ENCODE measurements at regions of chr9 and their contacts with region 1.

Region 1: GRCh38 chr9:98101868-98102273 is 17.2 kb downstream of the TRIM14 start:
- DNase-seq: peak; percentile 86
- ATAC-seq: peak; percentile 96
- H3K4me3 Mint-ChIP-seq: peak overlapping the region; percentile 49
- H3K27ac Mint-ChIP-seq: peak overlapping the region; percentile 95
- H3K4me1 Mint-ChIP-seq: peaks cover 84% of the 10 kb centered on the region
- H3K27me3 Mint-ChIP-seq: no peaks in the 10 kb centered on the region

Region 2: GRCh38 chr9:97237951-97238851 is 863.7 kb before region 1 on chr9:
- CTCF ChIA-PET with region 1: no interaction called
- POLR2A ChIA-PET with region 1: no interaction called
- intact Hi-C with region 1: loop called in 1 of 2 experiments (anchors 5 kb)
- DNase-seq: peak; percentile 91
- ATAC-seq: peak; percentile 95
- H3K4me3 Mint-ChIP-seq: peak overlapping the region; percentile 93
- H3K27ac Mint-ChIP-seq: peak overlapping the region; percentile 97
- H3K4me1 Mint-ChIP-seq: peaks cover 12% of the 10 kb centered on the region
- H3K27me3 Mint-ChIP-seq: no peaks in the 10 kb centered on the region

Region 3: GRCh38 chr9:97696803-97697601 is 404.9 kb before region 1 on chr9 and contains the start of gene XPA:
- CTCF ChIA-PET with region 1: no interaction called
- POLR2A ChIA-PET with region 1: no interaction called
- intact Hi-C with region 1: loop called in 1 of 2 experiments (anchors 10 kb)
- DNase-seq: peak; percentile 98
- ATAC-seq: peak; percentile 95
- H3K4me3 Mint-ChIP-seq: peak within 1 kb of the TSS; percentile 81
- H3K27ac Mint-ChIP-seq: peak within 1 kb of the TSS; percentile 92
- H3K4me1 Mint-ChIP-seq: peaks cover 45% of the 10 kb centered on the region
- H3K27me3 Mint-ChIP-seq: peaks cover 2% of the 10 kb centered on the region
- total RNA-seq, gene XPA: 8.7 to 11.1 TPM

Region 4: GRCh38 chr9:97740848-97741821 is 360.7 kb before region 1 on chr9:
- CTCF ChIA-PET with region 1: no interaction called
- POLR2A ChIA-PET with region 1: no interaction called
- intact Hi-C with region 1: no loop called
- DNase-seq: peak; percentile 67
- ATAC-seq: peak; percentile 82
- H3K4me3 Mint-ChIP-seq: peak overlapping the region; percentile 26
- H3K27ac Mint-ChIP-seq: no peak overlapping the region
- H3K4me1 Mint-ChIP-seq: peaks cover 6% of the 10 kb centered on the region
- H3K27me3 Mint-ChIP-seq: peaks cover 59% of the 10 kb centered on the region

Region 5: DNA sequence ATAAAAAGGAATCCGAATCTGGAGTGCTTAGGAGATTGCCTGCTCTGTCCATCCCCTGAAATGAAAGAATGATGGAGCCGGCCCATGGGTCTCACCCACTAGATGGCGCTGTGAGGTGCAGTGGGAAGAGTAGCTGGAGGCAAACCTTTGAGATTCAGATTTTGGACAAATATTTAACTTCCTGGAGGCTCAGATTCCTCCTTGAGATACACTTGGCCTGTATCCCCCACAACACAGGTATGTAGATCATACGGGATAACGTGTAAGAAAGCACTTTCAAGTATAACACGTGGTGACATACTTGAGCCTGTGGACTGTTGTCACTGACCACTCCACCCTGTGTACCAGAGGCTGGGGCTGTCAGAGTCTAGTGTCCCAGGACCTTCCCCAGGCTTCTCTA is 211.8 kb before region 1 on chr9:
- CTCF ChIA-PET with region 1: no interaction called
- POLR2A ChIA-PET with region 1: no interaction called
- intact Hi-C with region 1: no loop called
- DNase-seq: peak; percentile 86
- ATAC-seq: peak; percentile 75
- H3K4me3 Mint-ChIP-seq: no peak overlapping the region
- H3K27ac Mint-ChIP-seq: no peak overlapping the region
- H3K4me1 Mint-ChIP-seq: peaks cover 7% of the 10 kb centered on the region
- H3K27me3 Mint-ChIP-seq: no peaks in the 10 kb centered on the region

Region 6: GRCh38 chr9:98056269-98057137 is 45.4 kb before region 1 on chr9 and contains the start of gene NANS:
- CTCF ChIA-PET with region 1: interaction called, 3 read pairs
- POLR2A ChIA-PET with region 1: interaction called, 3 read pairs
- intact Hi-C with region 1: loop called (anchors 1 to 5 kb)
- DNase-seq: peak; percentile 97
- ATAC-seq: peak; percentile 94
- H3K4me3 Mint-ChIP-seq: peak within 1 kb of the TSS; percentile 94
- H3K27ac Mint-ChIP-seq: peak within 1 kb of the TSS; percentile 98
- H3K4me1 Mint-ChIP-seq: peaks cover 28% of the 10 kb centered on the region
- H3K27me3 Mint-ChIP-seq: no peaks in the 10 kb centered on the region
- total RNA-seq, gene NANS: 45.9 to 47.7 TPM

Region 7: DNA sequence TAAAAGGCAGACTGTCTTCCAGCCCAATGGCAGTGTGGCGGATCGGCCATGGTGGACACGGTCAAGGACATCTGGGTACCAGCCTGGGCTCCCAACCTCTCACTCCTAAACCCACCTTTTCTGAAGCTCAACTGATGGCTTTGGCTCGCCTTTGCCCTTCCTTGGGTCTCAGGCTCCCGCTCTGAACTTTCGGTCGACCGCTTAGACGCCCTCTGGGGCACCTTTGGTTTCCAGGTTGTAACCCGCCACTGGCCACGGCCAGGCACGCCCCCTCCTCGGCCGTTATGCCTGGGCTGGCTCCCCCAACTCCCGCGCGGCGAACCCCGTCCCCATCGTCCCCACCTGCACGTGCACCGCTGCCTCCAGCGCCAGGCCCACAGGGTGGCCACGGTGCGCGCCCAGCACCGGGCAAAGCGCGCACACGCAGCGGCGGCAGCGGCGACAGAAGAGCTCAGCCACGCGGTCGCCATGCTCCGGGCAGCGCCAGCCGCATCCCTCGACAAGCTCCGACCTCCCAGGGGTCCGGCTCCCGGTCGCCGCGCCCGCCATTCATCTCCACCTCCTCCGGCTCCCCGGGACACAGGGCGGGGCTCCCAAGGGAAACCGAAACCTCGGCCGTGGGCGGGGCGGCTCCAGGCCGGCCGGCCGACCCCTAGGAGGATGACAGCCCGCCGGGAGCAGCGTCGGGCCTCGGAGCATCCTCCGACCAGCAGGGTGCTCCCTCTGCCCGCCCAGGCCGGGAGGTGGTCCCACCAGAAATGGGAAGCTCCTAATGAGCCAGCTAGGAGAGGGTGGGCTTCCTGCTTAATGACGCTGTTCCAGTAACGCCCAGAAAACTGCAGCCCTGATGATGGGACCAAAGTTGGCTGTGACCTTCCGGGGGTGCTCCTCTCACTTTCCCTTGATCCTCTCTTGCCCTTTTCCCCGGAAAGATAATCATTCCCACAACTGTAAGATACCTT is 17.1 kb after region 1 on chr9 and contains the start of gene TRIM14:
- CTCF ChIA-PET with region 1: interaction called, 13 read pairs
- POLR2A ChIA-PET with region 1: interaction called, 5 read pairs
- intact Hi-C with region 1: loop called (anchors 1 kb)
- DNase-seq: peak; percentile 79
- ATAC-seq: peak; percentile 49
- H3K4me3 Mint-ChIP-seq: peak within 1 kb of the TSS; percentile 75
- H3K27ac Mint-ChIP-seq: peak within 1 kb of the TSS; percentile 91
- H3K4me1 Mint-ChIP-seq: peaks cover 47% of the 10 kb centered on the region
- H3K27me3 Mint-ChIP-seq: no peaks in the 10 kb centered on the region
- total RNA-seq, gene TRIM14: 54.6 to 59.6 TPM

Region 8: DNA sequence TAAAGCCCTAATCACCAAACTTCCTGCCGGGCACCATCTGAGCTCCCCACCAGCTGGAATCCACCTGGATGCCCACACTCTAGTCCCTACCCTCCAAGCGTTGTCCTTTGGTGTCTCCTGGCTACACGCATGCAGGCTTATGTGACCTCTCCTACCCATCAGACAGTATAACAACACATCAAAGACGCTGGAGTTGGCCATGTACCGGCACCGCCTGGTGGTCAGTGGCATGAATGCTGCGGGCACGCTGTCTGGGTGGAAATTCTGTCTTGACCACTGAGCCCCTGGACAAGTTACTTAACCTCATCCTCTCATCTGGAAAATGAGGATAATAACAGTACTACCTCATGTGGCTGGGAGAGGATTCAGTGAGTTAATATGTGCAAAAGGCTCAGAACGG is 114.0 kb after region 1 on chr9:
- CTCF ChIA-PET with region 1: no interaction called
- POLR2A ChIA-PET with region 1: no interaction called
- intact Hi-C with region 1: no loop called
- DNase-seq: peak; percentile 33
- ATAC-seq: no peak
- H3K4me3 Mint-ChIP-seq: no peak overlapping the region
- H3K27ac Mint-ChIP-seq: no peak overlapping the region
- H3K4me1 Mint-ChIP-seq: no peaks in the 10 kb centered on the region
- H3K27me3 Mint-ChIP-seq: no peaks in the 10 kb centered on the region

Region 9: GRCh38 chr9:98796364-98797101 is 694.7 kb after region 1 on chr9 and contains the start of gene ANKS6:
- CTCF ChIA-PET with region 1: no interaction called
- POLR2A ChIA-PET with region 1: no interaction called
- intact Hi-C with region 1: loop called in 1 of 2 experiments (anchors 10 kb)
- DNase-seq: peak; percentile 90
- ATAC-seq: peak; percentile 90
- H3K4me3 Mint-ChIP-seq: peak within 1 kb of the TSS; percentile 77
- H3K27ac Mint-ChIP-seq: peak within 1 kb of the TSS; percentile 81
- H3K4me1 Mint-ChIP-seq: peaks cover 25% of the 10 kb centered on the region
- H3K27me3 Mint-ChIP-seq: no peaks in the 10 kb centered on the region
- total RNA-seq, gene ANKS6: 15.8 to 17.4 TPM

Region 10: DNA sequence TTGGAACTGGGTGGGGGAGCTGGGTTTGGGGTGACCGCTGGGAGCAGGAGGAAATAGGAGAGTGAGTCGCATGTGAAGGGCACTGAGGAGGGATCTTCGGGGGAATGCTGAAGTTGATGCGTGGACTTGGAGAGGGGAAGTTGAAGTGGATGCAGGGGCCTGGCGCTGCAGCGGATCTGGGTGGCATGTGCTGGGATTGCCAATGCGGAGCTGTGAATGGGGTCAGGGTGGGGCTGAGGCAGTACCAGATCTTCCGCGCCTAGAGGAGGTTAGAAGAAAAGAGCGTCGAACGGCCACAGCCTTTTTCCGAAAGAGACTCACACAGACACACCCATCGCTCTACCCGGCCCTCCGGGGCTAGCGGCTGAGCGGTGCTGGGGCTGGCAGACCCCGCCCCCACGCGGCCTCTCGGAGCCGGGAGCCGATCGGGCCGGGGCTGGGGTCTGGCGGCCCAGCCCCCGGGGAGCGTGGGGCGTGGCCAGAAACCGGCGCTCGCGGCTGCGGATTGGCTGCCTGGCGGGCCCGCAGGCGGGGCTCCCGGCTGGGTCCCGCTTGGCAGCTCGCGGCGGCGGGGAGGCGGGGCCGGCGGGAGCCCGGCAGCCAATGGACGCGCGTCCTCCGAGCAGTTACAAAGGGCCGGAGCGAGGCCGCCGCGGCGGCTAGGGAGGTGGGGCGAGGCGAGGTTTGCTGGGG is 1002.7 kb after region 1 on chr9 and contains the start of gene TGFBR1:
- CTCF ChIA-PET with region 1: interaction called, 3 read pairs
- POLR2A ChIA-PET with region 1: no interaction called
- intact Hi-C with region 1: loop called in 1 of 2 experiments (anchors 10 kb)
- DNase-seq: peak; percentile 95
- ATAC-seq: peak; percentile 89
- H3K4me3 Mint-ChIP-seq: peak within 1 kb of the TSS; percentile 79
- H3K27ac Mint-ChIP-seq: peak within 1 kb of the TSS; percentile 83
- H3K4me1 Mint-ChIP-seq: peaks cover 49% of the 10 kb centered on the region
- H3K27me3 Mint-ChIP-seq: no peaks in the 10 kb centered on the region
- total RNA-seq, gene TGFBR1: 18.6 to 19.3 TPM

Measured in activated CD4-positive, alpha-beta T cell treated with anti-CD3 and anti-CD28 coated beads for 36 hours (primary cell).